ENCODE measurements at regions of chr6 and their contacts with region 1.

Region 1: GRCh38 chr6:30626484-30627366 is at the start of gene ATAT1:
- DNase-seq: peak; percentile 60 to 96
- H3K4me3 ChIP-seq: peak within 1 kb of the TSS; percentile 79 to 88 (median 83)
- H3K27ac ChIP-seq: peak within 1 kb of the TSS; percentile 92
- H3K4me1 ChIP-seq: peaks cover 2 to 10% (median 4%) of the 10 kb centered on the region in 4 experiments; a peak in 5 of 7 replicates
- H3K27me3 ChIP-seq: no peaks in the 10 kb centered on the region
- CTCF ChIP-seq: peak; percentile 37 to 57 (median 44)
- EP300 ChIP-seq: no peak
- POLR2A ChIP-seq: peak; percentile 62 to 93
- RAD21 ChIP-seq: peak in 1 of 2 experiments; percentile 29; a peak in 2 of 4 replicates
- total RNA-seq, gene ATAT1: 14.6 and 15.9 TPM in 2 replicates

Region 2: GRCh38 chr6:30611150-30611855 is 15.4 kb before region 1 on chr6:
- CTCF ChIA-PET with region 1: interaction called, 3 read pairs
- POLR2A ChIA-PET with region 1: interaction called, 62 read pairs
- DNase-seq: no peak
- H3K4me3 ChIP-seq: no peak overlapping the region
- H3K27ac ChIP-seq: no peak overlapping the region
- H3K4me1 ChIP-seq: peaks cover 0 to 6% (median 3%) of the 10 kb centered on the region in 4 experiments; a peak in 4 of 7 replicates
- H3K27me3 ChIP-seq: no peaks in the 10 kb centered on the region
- CTCF ChIP-seq: no peak
- EP300 ChIP-seq: no peak
- POLR2A ChIP-seq: no peak
- RAD21 ChIP-seq: no peak

Region 3: DNA sequence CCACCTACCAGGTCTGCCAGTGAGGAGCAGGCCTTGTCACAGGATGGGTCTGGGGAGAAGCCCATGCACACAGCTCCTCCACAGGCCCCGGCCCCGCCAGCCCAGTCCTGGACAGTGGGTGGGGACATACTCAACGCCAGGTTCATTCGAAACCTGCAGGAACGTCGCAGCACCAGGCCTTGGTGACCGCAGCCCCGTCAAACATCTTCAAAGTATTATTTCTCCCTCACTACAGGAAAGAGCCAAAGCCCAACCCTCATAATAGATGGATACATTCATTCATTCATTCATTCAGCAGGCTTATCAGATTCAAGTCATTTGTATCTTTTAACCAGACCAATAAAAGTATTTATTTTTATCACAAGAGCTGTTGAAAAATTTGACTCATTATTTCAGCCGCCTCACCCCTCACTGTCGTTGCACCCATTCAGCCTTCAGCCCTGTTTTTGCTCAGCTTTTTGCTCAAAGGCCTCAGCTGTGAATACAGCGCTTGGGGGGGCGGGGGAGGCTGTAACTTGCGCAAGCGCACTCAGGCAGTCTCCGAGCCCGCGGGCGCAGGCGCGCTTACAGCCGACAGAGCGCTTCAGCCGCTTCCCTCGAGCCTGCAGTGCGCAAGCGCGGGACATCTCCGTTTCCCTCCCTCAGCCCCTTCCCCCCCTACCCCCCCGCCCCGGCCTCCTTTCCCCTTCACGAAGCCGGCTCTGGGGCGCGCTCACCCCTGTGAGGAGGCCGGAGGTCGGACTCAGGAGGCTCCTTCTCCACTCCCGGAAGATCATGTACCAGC is 19.9 kb after region 1 on chr6 and contains the start of gene C6orf136:
- CTCF ChIA-PET with region 1: interaction called, 5 read pairs
- POLR2A ChIA-PET with region 1: interaction called, 20 read pairs
- DNase-seq: peak; percentile 75 to 87
- H3K4me3 ChIP-seq: peak within 1 kb of the TSS; percentile 74 to 91 (median 85)
- H3K27ac ChIP-seq: peak within 1 kb of the TSS; percentile 66
- H3K4me1 ChIP-seq: peaks cover 0 to 6% (median 4%) of the 10 kb centered on the region in 4 experiments; a peak in 5 of 7 replicates
- H3K27me3 ChIP-seq: no peaks in the 10 kb centered on the region
- CTCF ChIP-seq: no peak
- EP300 ChIP-seq: no peak
- POLR2A ChIP-seq: no peak
- RAD21 ChIP-seq: no peak
- total RNA-seq, gene C6orf136: 18.2 and 20.8 TPM in 2 replicates